ENCODE measurements at regions of chr2 and their contacts with region 1.

Region 1: GRCh38 chr2:121076885-121077549 is 208.0 kb downstream of the TFCP2L1 start:
- DNase-seq: peak; percentile 73
- CTCF ChIP-seq: peak; percentile 93

Region 2: GRCh38 chr2:120343433-120344105 is 733.4 kb before region 1 on chr2:
- in situ Hi-C with region 1: no loop called
- DNase-seq: peak; percentile 86
- CTCF ChIP-seq: peak; percentile 79

Region 3: DNA sequence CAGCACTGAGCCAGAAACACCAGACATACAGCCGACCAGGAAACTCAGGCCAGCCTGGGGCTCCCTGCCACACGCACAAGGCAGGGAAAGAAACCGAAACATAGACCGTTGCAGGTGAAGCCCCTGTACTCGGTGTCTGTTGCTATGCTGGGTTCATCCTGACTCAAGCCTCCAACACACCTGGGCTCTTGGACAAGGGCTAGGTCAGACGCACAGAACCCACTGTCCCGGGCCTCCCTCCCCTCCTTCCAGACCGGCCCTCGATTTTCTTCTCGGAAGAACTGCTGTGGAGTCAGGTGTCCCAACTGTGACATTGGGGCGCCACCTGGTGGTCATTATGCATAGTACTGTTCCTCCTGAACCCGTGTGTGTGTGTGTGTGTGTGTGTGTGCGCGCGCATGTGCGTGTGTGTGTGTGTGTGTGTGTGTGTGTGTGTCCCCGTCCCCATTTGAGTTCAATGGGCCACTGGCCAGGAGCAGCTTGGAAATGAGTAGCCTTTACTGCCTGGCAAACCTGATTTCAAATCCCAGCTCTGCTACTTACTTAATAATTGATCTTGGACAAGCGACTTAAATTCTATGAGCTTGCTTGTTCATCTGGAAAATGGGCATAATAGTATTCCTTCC is 396.8 kb before region 1 on chr2:
- in situ Hi-C with region 1: loop called (anchors 25 kb)
- DNase-seq: peak; percentile 78
- CTCF ChIP-seq: peak; percentile 79

Region 4: GRCh38 chr2:121333834-121334558 is 257.0 kb after region 1 on chr2:
- in situ Hi-C with region 1: loop called (anchors 25 kb)
- DNase-seq: peak; percentile 65
- CTCF ChIP-seq: no peak